Activated CD8-positive, alpha-beta T cell treated with anti-CD3 and anti-CD28 coated beads, Interleukin-2, amount 10 ng/mL, durations not matched to agents 7 days and 5 days (primary cell): ENCODE measurements at regions of chr9 and their contacts with region 1.

Region 1: GRCh38 chr9:27529316-27530278 is at the start of gene MOB3B:
- DNase-seq: peak; percentile 81
- ATAC-seq: peak; percentile 90
- H3K4me3 Mint-ChIP-seq: peak within 1 kb of the TSS; percentile 83
- H3K27ac Mint-ChIP-seq: peak within 1 kb of the TSS; percentile 75
- H3K4me1 Mint-ChIP-seq: peaks cover 14% of the 10 kb centered on the region
- H3K27me3 Mint-ChIP-seq: peaks cover 17% of the 10 kb centered on the region
- total RNA-seq, gene MOB3B: 2.5 to 2.8 TPM

Region 2: GRCh38 chr9:27407986-27408385 is 121.6 kb before region 1 on chr9:
- CTCF ChIA-PET with region 1: no interaction called
- POLR2A ChIA-PET with region 1: no interaction called
- DNase-seq: no peak
- ATAC-seq: no peak
- H3K4me3 Mint-ChIP-seq: no peak overlapping the region
- H3K27ac Mint-ChIP-seq: no peak overlapping the region
- H3K4me1 Mint-ChIP-seq: no peaks in the 10 kb centered on the region
- H3K27me3 Mint-ChIP-seq: peaks cover 6% of the 10 kb centered on the region

Region 3: GRCh38 chr9:27427273-27427645 is 102.3 kb before region 1 on chr9:
- CTCF ChIA-PET with region 1: no interaction called
- POLR2A ChIA-PET with region 1: no interaction called
- DNase-seq: no peak
- ATAC-seq: no peak
- H3K4me3 Mint-ChIP-seq: no peak overlapping the region
- H3K27ac Mint-ChIP-seq: no peak overlapping the region
- H3K4me1 Mint-ChIP-seq: peaks cover 15% of the 10 kb centered on the region
- H3K27me3 Mint-ChIP-seq: peaks cover 3% of the 10 kb centered on the region

Region 4: DNA sequence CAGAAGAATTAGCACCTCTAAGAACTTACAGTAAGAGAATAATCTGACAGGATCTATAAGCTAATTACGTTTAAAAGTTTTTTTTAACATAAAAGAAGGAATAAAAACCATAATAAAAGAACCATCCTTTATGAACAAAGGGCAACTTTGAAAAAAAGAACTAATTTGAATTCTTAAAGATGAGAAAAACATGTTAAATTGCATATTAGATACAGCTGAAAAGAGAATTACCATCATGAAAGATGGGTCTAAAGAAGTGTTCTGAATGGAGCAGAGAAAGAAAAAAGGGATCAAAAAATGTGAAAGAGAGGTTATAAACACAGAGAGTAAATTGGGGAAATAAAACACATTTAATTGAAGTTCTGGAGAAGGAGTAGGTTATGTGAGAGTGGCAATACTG is 51.3 kb before region 1 on chr9:
- CTCF ChIA-PET with region 1: no interaction called
- POLR2A ChIA-PET with region 1: no interaction called
- DNase-seq: no peak
- ATAC-seq: no peak
- H3K4me3 Mint-ChIP-seq: no peak overlapping the region
- H3K27ac Mint-ChIP-seq: no peak overlapping the region
- H3K4me1 Mint-ChIP-seq: peaks cover 3% of the 10 kb centered on the region
- H3K27me3 Mint-ChIP-seq: peaks cover 3% of the 10 kb centered on the region

Region 5: GRCh38 chr9:27548055-27548741 is 18.6 kb after region 1 on chr9:
- CTCF ChIA-PET with region 1: interaction called, 11 read pairs
- POLR2A ChIA-PET with region 1: no interaction called
- DNase-seq: no peak
- ATAC-seq: no peak
- H3K4me3 Mint-ChIP-seq: no peak overlapping the region
- H3K27ac Mint-ChIP-seq: no peak overlapping the region
- H3K4me1 Mint-ChIP-seq: no peaks in the 10 kb centered on the region
- H3K27me3 Mint-ChIP-seq: no peaks in the 10 kb centered on the region

Region 6: DNA sequence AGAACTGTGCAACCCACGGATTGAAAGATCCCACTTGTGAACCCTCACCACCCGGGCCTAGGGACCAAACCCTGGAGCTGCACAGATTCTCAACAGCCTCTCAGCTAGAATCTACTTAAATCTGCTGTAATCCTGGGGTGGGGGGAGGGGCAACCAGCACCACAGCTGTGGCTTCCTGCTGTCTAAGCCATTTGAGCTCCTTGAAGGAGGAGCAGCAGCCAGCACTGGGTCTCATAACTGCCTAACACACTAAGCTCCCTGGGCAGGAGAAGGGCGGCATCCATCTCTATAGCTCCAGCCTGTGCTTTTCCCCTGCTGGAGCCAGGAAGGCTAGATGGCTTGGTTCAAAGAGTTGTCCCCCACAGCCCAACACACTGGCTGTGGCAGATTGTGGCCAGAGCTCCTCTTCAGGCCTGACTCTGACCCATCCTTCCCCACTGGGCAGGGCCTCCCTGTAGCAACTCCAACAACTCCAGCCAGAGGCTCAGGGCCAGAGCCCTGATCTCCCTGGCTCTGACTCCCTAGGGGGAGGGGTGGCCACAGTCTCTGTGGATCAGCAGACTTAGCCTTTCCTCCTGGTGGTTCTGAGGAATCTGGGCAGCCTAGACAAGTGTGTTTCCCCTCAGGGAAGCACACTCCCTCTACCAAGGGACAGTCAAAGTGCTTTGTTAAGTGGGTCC is 115.7 kb after region 1 on chr9:
- CTCF ChIA-PET with region 1: no interaction called
- POLR2A ChIA-PET with region 1: no interaction called
- DNase-seq: no peak
- ATAC-seq: no peak
- H3K4me3 Mint-ChIP-seq: no peak overlapping the region
- H3K27ac Mint-ChIP-seq: no peak overlapping the region
- H3K4me1 Mint-ChIP-seq: no peaks in the 10 kb centered on the region
- H3K27me3 Mint-ChIP-seq: peaks cover 5% of the 10 kb centered on the region